ENCODE measurements at regions of chr6 and their contacts with region 1.

Region 1: DNA sequence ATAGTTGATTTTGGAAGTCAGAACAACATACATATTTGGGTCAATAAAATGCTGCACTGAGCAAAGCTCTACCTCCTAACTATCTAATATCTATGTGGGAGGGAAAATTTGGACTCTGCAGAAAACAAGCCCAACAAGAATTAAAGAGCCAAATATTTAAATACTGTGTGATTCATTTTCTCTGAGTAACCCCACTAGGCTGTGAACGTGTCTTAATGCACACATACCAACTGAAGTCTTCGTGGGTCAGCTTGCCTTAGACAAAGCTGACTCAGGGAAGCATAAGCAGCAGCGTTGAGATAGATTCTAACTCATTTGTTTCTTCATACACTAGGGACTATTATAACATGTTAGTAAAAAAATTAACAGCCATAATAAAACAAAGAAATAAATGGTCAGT is 114.3 kb downstream of the GJA1 start:
- DNase-seq: no peak
- H3K4me3 ChIP-seq: no peak overlapping the region
- H3K27ac ChIP-seq: peak overlapping the region; percentile 66 to 67
- H3K4me1 ChIP-seq: peaks cover 3 to 21% of the 10 kb centered on the region in 2 donors
- H3K27me3 ChIP-seq: no peaks in the 10 kb centered on the region
- CTCF ChIP-seq: no peak

Region 2: GRCh38 chr6:121334299-121335086 is 215.2 kb before region 1 on chr6 and contains the start of gene TBC1D32:
- intact Hi-C with region 1: no loop called
- DNase-seq: peak; percentile 47 to 96
- H3K4me3 ChIP-seq: peak within 1 kb of the TSS; percentile 74 to 76
- H3K27ac ChIP-seq: peak within 1 kb of the TSS; percentile 94 to 96
- H3K4me1 ChIP-seq: no peaks in the 10 kb centered on the region
- H3K27me3 ChIP-seq: no peaks in the 10 kb centered on the region
- CTCF ChIP-seq: no peak
- total RNA-seq, gene TBC1D32: 2.1 TPM

Region 3: DNA sequence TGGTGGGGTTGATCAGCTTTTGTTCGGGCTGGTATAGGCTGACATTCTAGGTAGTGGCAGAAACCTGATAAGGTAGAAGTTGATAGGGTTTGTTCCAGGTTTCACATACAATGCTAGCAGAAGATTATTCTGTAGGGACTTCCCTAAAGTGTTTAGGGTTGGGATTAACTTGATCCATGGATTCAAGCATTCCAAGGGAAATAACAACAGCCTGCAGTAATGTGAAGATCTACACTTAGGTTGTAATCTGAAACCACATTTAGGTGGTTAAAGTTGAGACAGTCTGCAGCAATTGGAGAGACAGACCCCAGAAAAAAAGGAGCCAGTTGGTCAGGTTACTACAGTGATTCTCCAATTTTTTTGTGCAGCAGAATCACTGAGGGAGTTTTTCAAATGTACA is 58.1 kb before region 1 on chr6:
- intact Hi-C with region 1: loop called (anchors 5 kb)
- DNase-seq: no peak
- H3K4me3 ChIP-seq: no peak overlapping the region
- H3K27ac ChIP-seq: peak overlapping the region; percentile 48 to 75
- H3K4me1 ChIP-seq: peaks cover 3 to 19% of the 10 kb centered on the region in 2 donors
- H3K27me3 ChIP-seq: no peaks in the 10 kb centered on the region
- CTCF ChIP-seq: no peak

Region 4: GRCh38 chr6:121584586-121585369 is 35.1 kb after region 1 on chr6:
- intact Hi-C with region 1: loop called (anchors 2 kb)
- DNase-seq: no peak
- H3K4me3 ChIP-seq: no peak overlapping the region
- H3K27ac ChIP-seq: peak overlapping the region; percentile 57 to 69
- H3K4me1 ChIP-seq: peaks cover 0 to 15% of the 10 kb centered on the region in 2 donors
- H3K27me3 ChIP-seq: no peaks in the 10 kb centered on the region
- CTCF ChIP-seq: no peak

Region 5: GRCh38 chr6:121759370-121759769 is 209.7 kb after region 1 on chr6:
- intact Hi-C with region 1: no loop called
- DNase-seq: no peak
- H3K4me3 ChIP-seq: no peak overlapping the region
- H3K27ac ChIP-seq: no peak overlapping the region
- H3K4me1 ChIP-seq: peaks cover 0 to 3% of the 10 kb centered on the region in 2 donors
- H3K27me3 ChIP-seq: no peaks in the 10 kb centered on the region
- CTCF ChIP-seq: no peak